Uterus (tissue), 4 donors: ENCODE measurements at regions of chr3 and their contacts with region 1.

Region 1: DNA sequence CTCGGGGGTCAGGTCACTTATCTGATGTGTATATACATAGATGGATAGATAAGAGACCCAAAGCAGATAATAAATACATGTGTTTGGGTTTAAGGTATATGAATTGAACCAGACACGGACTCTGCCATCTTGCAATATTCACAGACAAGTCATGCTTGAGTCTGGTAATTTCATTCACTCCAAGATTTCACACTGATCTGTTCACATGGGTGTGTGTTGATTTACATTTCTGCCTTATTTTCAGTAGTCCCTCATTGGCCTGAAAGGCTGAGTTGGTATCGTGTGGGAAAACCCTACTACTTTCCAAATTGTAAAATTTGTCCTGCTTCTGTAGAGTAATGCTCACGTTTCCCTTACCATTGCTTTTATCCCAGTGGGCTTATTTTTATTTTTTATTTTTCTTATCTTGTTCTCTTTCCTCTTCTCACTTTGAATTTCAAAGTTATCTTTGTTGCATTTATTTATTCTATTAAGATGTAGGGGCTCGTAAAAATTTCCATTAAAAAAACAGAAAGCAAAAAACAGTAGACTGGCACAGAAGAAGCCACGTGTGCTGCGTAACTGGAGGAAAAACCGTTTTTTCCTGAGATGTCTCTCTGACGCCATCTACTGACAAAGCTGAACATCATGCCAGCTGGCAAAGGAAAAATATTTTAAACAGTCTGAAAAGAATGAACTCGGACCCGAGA is 10.8 kb upstream of the MFSD1 start:
- DNase-seq: peak in 1 of 2 donors; percentile 46
- H3K4me3 ChIP-seq: no peak overlapping the region
- H3K27ac ChIP-seq: no peak overlapping the region
- H3K4me1 ChIP-seq: no peaks in the 10 kb centered on the region
- H3K27me3 ChIP-seq: no peaks in the 10 kb centered on the region
- CTCF ChIP-seq: peak; percentile 82 to 87 (median 84)
- POLR2A ChIP-seq: no peak

Region 2: GRCh38 chr3:158644345-158644908 is 146.6 kb before region 1 on chr3 and contains the start of gene GFM1:
- intact Hi-C with region 1: loop called (anchors 10 kb)
- DNase-seq: peak; percentile 89 to 93
- H3K4me3 ChIP-seq: peak within 1 kb of the TSS; percentile 86 to 87
- H3K27ac ChIP-seq: peak within 1 kb of the TSS; percentile 77 to 80
- H3K4me1 ChIP-seq: no peaks in the 10 kb centered on the region
- H3K27me3 ChIP-seq: no peaks in the 10 kb centered on the region
- CTCF ChIP-seq: peak; percentile 84 to 96 (median 94)
- POLR2A ChIP-seq: peak; percentile 11 to 17
- total RNA-seq, gene GFM1: 32.6 to 81.4 (median 50.9) TPM

Region 3: DNA sequence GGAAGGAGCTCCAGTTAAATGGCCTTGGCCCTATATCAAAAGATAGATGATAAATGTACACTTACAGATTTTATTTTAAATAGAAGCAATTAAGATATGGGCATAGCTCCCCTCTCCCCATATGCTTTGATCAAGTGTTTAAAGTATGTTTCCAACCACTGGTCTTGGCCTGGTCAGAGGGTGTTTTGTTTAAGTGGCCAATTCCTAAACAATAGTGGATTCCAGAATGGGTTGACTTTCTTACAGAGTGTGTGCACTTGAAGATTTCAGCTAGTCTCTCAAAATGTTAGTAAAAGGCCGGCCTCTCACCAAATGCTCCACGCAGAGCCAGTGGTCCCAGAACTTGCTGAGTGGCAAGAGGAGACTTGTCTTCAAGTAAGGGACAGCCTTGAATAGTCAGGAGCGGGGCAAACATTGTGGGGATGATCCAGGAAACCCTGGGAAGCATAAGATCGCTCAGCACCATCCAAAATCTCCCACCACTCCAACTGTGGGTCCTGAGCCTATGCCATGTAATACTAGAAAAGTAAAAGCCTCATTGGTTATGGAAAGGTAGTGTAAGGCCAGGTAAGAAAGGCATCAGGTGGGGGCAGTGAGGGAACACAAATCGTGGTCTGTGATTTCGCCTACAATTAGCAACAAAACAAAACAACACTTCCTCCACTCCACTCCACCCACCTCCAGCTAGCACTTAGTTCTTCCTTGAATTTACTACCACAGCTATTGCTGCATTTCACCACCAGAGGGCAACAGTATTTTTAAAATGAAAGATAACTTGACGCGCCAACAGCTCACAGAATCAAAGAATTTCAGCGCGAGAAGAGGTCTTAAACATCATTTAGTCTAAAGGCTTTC is 63.6 kb before region 1 on chr3:
- intact Hi-C with region 1: loop called (anchors 2 kb)
- DNase-seq: peak in 1 of 2 donors; percentile 76
- H3K4me3 ChIP-seq: peak overlapping the region in 1 of 2 donors; percentile 9
- H3K27ac ChIP-seq: peak overlapping the region; percentile 69 to 73
- H3K4me1 ChIP-seq: peaks cover 0 to 7% of the 10 kb centered on the region in 2 donors
- H3K27me3 ChIP-seq: no peaks in the 10 kb centered on the region
- CTCF ChIP-seq: peak; percentile 85 to 93 (median 88)
- POLR2A ChIP-seq: no peak